ENCODE measurements at regions of chr6 and their contacts with region 1.

Region 1: GRCh38 chr6:156167625-156168071 is 609.5 kb upstream of the ARID1B start:
- DNase-seq: no peak
- ATAC-seq: peak; percentile 54 to 74
- H3K4me3 ChIP-seq: peak overlapping the region; percentile 21 to 42 (median 35)
- H3K27ac ChIP-seq: peak overlapping the region; percentile 57 to 76 (median 68)
- H3K4me1 ChIP-seq: no peaks in the 10 kb centered on the region
- H3K27me3 ChIP-seq: no peaks in the 10 kb centered on the region
- CTCF ChIP-seq: no peak
- POLR2A ChIP-seq: peak in 1 of 2 donors; percentile 44

Region 2: DNA sequence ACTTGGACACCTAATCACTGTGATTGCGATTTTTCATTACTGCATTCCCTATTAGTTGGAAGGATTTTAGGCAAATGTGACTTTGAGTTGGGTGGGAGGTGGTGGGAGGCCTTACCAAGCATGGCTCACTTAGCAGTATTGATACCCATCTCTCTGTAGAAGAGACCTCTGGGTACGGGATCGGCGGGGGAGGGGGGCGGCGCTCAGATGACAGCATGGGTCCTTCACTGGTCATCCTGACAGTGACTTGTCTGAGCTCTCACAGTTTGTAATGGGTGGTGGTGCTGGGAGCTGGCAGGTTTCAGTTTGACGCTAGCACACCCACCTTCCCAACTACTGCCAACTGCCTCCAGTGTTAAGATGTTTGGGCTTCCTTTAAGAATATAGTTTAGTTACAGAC is 840.9 kb after region 1 on chr6:
- in situ Hi-C with region 1: no loop called
- intact Hi-C with region 1: loop called (anchors 10 kb)
- DNase-seq: no peak
- ATAC-seq: no peak
- H3K4me3 ChIP-seq: no peak overlapping the region
- H3K27ac ChIP-seq: no peak overlapping the region
- H3K4me1 ChIP-seq: peaks cover 17 to 27% of the 10 kb centered on the region in 2 donors
- H3K27me3 ChIP-seq: no peaks in the 10 kb centered on the region
- CTCF ChIP-seq: no peak
- POLR2A ChIP-seq: no peak

Measured in gastrocnemius medialis (tissue), 4 donors.